Dorsolateral prefrontal cortex (tissue), 120 donors: ENCODE measurements at regions of chr16 and their contacts with region 1.

Region 1: GRCh38 chr16:31713071-31713944 is 160.3 kb upstream of the ZNF267 start:
- DNase-seq: peak; percentile 80 to 95 (median 92)
- H3K4me3 ChIP-seq: peak overlapping the region; percentile 68 to 99 (median 91)
- H3K27ac ChIP-seq: peak overlapping the region; percentile 35 to 96 (median 87)
- H3K27me3 ChIP-seq: no peaks in the 10 kb centered on the region
- CTCF ChIP-seq: peak in 22 of 56 donors; percentile 4 to 30 (median 12)

Region 2: GRCh38 chr16:31507929-31508705 is 205.2 kb before region 1 on chr16 and contains the start of gene RUSF1:
- intact Hi-C with region 1: loop called (anchors 5 to 10 kb)
- DNase-seq: peak; percentile 88 to 94 (median 92)
- H3K4me3 ChIP-seq: peak within 1 kb of the TSS; percentile 52 to 100 (median 97)
- H3K27ac ChIP-seq: peak within 1 kb of the TSS; percentile 56 to 98 (median 93)
- H3K27me3 ChIP-seq: no peaks in the 10 kb centered on the region
- CTCF ChIP-seq: peak in 36 of 56 donors; percentile 4 to 57 (median 26)
- total RNA-seq, gene RUSF1: 29.1 to 91.6 (median 63.9) TPM

Region 3: GRCh38 chr16:31873556-31874365 is 160.5 kb after region 1 on chr16 and contains the start of gene ZNF267:
- intact Hi-C with region 1: loop called in 1 of 2 experiments (anchors 10 kb)
- DNase-seq: peak; percentile 80 to 95 (median 93)
- H3K4me3 ChIP-seq: peak within 1 kb of the TSS; percentile 77 to 100 (median 98)
- H3K27ac ChIP-seq: peak within 1 kb of the TSS in 57 of 59 donors; percentile 34 to 94 (median 84)
- H3K27me3 ChIP-seq: no peaks in the 10 kb centered on the region
- CTCF ChIP-seq: peak in 8 of 56 donors; percentile 2 to 36 (median 27)
- total RNA-seq, gene ZNF267: 6.4 to 23.6 (median 11.4) TPM